Activated CD8-positive, alpha-beta T cell treated with anti-CD3 and anti-CD28 coated beads for 36 hours (primary cell): ENCODE measurements at regions of chr22 and their contacts with region 1.

Region 1: GRCh38 chr22:24156913-24157821 is 24.1 kb upstream of the SUSD2 start:
- DNase-seq: peak; percentile 94
- ATAC-seq: peak; percentile 72
- H3K4me3 Mint-ChIP-seq: peak overlapping the region; percentile 74
- H3K27ac Mint-ChIP-seq: peak overlapping the region; percentile 84
- H3K4me1 Mint-ChIP-seq: peaks cover 88% of the 10 kb centered on the region
- H3K27me3 Mint-ChIP-seq: no peaks in the 10 kb centered on the region
- CTCF ChIP-seq: peak; percentile 87

Region 2: GRCh38 chr22:23826465-23827199 is 330.5 kb before region 1 on chr22:
- CTCF ChIA-PET with region 1: no interaction called
- POLR2A ChIA-PET with region 1: no interaction called
- intact Hi-C with region 1: no loop called
- DNase-seq: no peak
- ATAC-seq: no peak
- H3K4me3 Mint-ChIP-seq: no peak overlapping the region
- H3K27ac Mint-ChIP-seq: peak overlapping the region; percentile 79
- H3K4me1 Mint-ChIP-seq: peaks cover 2% of the 10 kb centered on the region
- H3K27me3 Mint-ChIP-seq: no peaks in the 10 kb centered on the region
- CTCF ChIP-seq: no peak

Region 3: DNA sequence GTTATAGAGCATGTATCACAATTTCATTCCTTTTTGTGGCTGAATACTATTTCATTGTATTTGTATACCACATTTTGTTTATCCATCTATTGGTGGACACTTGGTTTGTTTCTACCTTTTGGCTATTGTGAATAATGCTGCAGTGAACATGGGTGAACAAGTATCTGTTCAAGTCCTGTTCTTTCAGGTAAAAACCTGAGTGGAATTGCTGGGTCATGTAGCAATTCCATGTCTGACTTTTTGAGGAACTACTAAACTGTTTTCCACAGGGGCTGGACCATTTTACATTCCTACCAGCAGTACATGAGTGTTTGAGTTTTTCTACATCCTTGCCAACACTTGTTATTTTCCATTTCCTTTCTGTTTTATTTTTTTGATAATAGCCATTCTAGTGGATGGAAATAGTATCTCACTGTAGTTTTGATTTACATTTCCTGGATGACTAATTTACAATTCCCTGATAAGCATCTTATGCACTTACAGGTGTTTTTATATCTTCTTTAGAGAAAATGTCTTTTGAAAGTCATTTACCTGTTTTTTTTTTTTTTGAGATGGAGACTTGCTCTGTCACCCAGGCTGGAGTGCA is 133.9 kb before region 1 on chr22:
- CTCF ChIA-PET with region 1: no interaction called
- POLR2A ChIA-PET with region 1: no interaction called
- intact Hi-C with region 1: no loop called
- DNase-seq: no peak
- ATAC-seq: peak; percentile 62
- H3K4me3 Mint-ChIP-seq: no peak overlapping the region
- H3K27ac Mint-ChIP-seq: peak overlapping the region; percentile 83
- H3K4me1 Mint-ChIP-seq: peaks cover 53% of the 10 kb centered on the region
- H3K27me3 Mint-ChIP-seq: no peaks in the 10 kb centered on the region
- CTCF ChIP-seq: no peak

Region 4: GRCh38 chr22:24091551-24092420 is 65.4 kb before region 1 on chr22:
- CTCF ChIA-PET with region 1: no interaction called
- POLR2A ChIA-PET with region 1: no interaction called
- intact Hi-C with region 1: no loop called
- DNase-seq: no peak
- ATAC-seq: no peak
- H3K4me3 Mint-ChIP-seq: no peak overlapping the region
- H3K27ac Mint-ChIP-seq: no peak overlapping the region
- H3K4me1 Mint-ChIP-seq: peaks cover 4% of the 10 kb centered on the region
- H3K27me3 Mint-ChIP-seq: no peaks in the 10 kb centered on the region
- CTCF ChIP-seq: no peak

Region 5: GRCh38 chr22:24133187-24133965 is 23.8 kb before region 1 on chr22:
- CTCF ChIA-PET with region 1: interaction called, 83 read pairs
- POLR2A ChIA-PET with region 1: interaction called, 3 read pairs
- intact Hi-C with region 1: no loop called
- DNase-seq: peak; percentile 37
- ATAC-seq: peak; percentile 40
- H3K4me3 Mint-ChIP-seq: no peak overlapping the region
- H3K27ac Mint-ChIP-seq: no peak overlapping the region
- H3K4me1 Mint-ChIP-seq: peaks cover 41% of the 10 kb centered on the region
- H3K27me3 Mint-ChIP-seq: no peaks in the 10 kb centered on the region
- CTCF ChIP-seq: no peak

Region 6: GRCh38 chr22:24140357-24140756 is 16.8 kb before region 1 on chr22:
- CTCF ChIA-PET with region 1: interaction called, 83 read pairs
- POLR2A ChIA-PET with region 1: interaction called, 10 read pairs
- intact Hi-C with region 1: no loop called
- DNase-seq: no peak
- ATAC-seq: no peak
- H3K4me3 Mint-ChIP-seq: no peak overlapping the region
- H3K27ac Mint-ChIP-seq: no peak overlapping the region
- H3K4me1 Mint-ChIP-seq: peaks cover 66% of the 10 kb centered on the region
- H3K27me3 Mint-ChIP-seq: no peaks in the 10 kb centered on the region
- CTCF ChIP-seq: no peak

Region 7: DNA sequence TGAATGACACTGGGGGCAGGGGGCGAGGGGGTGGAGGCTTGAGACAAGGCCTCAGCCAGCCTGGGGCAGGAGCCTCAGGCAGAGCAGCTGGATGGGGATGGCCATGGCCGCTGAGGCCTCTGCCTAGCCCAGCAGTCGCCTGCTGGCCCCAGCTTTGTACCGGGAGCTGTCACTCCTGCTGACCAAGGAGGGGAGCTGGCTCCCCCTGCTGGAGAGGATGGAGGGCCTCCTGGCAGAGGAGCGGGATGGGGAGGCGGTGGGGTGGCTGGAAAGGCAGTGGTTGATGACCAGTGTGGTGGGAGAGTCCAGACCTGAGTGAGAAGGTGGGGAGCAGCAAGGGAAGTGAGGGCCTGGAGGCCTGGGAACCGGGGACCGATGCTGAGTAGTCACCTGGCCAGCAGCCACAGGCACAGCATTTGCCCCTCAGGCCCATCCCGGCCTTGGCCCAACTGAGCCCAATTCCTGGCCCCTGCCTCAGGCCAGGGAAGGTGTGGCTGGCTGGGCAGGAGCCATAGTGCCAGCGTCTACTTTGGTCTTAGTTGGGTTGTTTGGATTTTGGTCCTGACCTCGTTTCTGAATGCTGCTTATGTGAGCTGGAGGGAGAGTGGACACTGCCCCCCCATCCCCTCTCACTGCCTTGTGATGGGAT is 18.1 kb after region 1 on chr22:
- CTCF ChIA-PET with region 1: interaction called, 63 read pairs
- POLR2A ChIA-PET with region 1: interaction called, 4 read pairs
- intact Hi-C with region 1: no loop called
- DNase-seq: peak; percentile 73
- ATAC-seq: peak; percentile 69
- H3K4me3 Mint-ChIP-seq: no peak overlapping the region
- H3K27ac Mint-ChIP-seq: peak overlapping the region; percentile 5
- H3K4me1 Mint-ChIP-seq: peaks cover 4% of the 10 kb centered on the region
- H3K27me3 Mint-ChIP-seq: no peaks in the 10 kb centered on the region
- CTCF ChIP-seq: peak; percentile 72